SK-N-SH (cell line): ENCODE measurements at regions of chr16 and their contacts with region 1.

Region 1: GRCh38 chr16:28277537-28278388 is 14.6 kb upstream of the SBK1 start:
- DNase-seq: peak; percentile 86
- H3K4me3 ChIP-seq: peak overlapping the region; percentile 48 to 60
- H3K27ac ChIP-seq: peak overlapping the region in 1 of 2 experiments; percentile 71; a peak in 2 of 4 replicates
- H3K4me1 ChIP-seq: peaks cover 0 to 5% of the 10 kb centered on the region in 2 experiments; a peak in 1 of 4 replicates
- H3K27me3 ChIP-seq: peaks cover 6% of the 10 kb centered on the region
- CTCF ChIP-seq: peak; percentile 90
- EP300 ChIP-seq: no peak
- RAD21 ChIP-seq: peak; percentile 97

Region 2: DNA sequence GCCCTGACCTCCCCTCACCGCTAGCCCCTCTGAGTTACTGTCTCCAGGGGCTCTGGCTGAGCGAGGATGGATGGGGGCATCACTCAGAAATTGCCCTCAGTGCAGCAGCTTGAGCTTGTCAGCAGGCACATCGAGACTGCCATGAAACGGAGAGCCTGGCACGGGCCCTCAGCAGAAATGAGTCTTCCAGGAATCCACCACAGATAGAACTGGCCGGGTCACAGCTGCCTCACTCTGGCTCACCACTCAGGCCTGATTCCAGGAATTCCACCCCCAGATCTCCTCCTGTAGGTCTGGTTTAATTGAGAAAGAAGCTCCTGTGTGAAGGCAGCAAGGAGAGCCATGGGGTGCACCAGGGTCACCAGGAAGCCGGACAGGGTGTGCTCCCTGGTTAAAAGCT is 299.8 kb before region 1 on chr16:
- CTCF ChIA-PET with region 1: no interaction called
- POLR2A ChIA-PET with region 1: no interaction called
- DNase-seq: no peak
- H3K4me3 ChIP-seq: no peak overlapping the region
- H3K27ac ChIP-seq: no peak overlapping the region
- H3K4me1 ChIP-seq: peaks cover 0 to 5% of the 10 kb centered on the region in 2 experiments; a peak in 1 of 4 replicates
- H3K27me3 ChIP-seq: no peaks in the 10 kb centered on the region
- CTCF ChIP-seq: no peak
- EP300 ChIP-seq: no peak
- RAD21 ChIP-seq: no peak

Region 3: GRCh38 chr16:27993587-27993986 is 284.2 kb before region 1 on chr16:
- CTCF ChIA-PET with region 1: no interaction called
- POLR2A ChIA-PET with region 1: no interaction called
- DNase-seq: no peak
- H3K4me3 ChIP-seq: no peak overlapping the region
- H3K27ac ChIP-seq: no peak overlapping the region
- H3K4me1 ChIP-seq: no peaks in the 10 kb centered on the region
- H3K27me3 ChIP-seq: no peaks in the 10 kb centered on the region
- CTCF ChIP-seq: no peak
- EP300 ChIP-seq: no peak
- RAD21 ChIP-seq: no peak

Region 4: GRCh38 chr16:28042811-28043210 is 235.0 kb before region 1 on chr16:
- CTCF ChIA-PET with region 1: no interaction called
- POLR2A ChIA-PET with region 1: no interaction called
- DNase-seq: no peak
- H3K4me3 ChIP-seq: no peak overlapping the region
- H3K27ac ChIP-seq: no peak overlapping the region
- H3K4me1 ChIP-seq: no peaks in the 10 kb centered on the region
- H3K27me3 ChIP-seq: no peaks in the 10 kb centered on the region
- CTCF ChIP-seq: no peak
- EP300 ChIP-seq: no peak
- RAD21 ChIP-seq: no peak

Region 5: DNA sequence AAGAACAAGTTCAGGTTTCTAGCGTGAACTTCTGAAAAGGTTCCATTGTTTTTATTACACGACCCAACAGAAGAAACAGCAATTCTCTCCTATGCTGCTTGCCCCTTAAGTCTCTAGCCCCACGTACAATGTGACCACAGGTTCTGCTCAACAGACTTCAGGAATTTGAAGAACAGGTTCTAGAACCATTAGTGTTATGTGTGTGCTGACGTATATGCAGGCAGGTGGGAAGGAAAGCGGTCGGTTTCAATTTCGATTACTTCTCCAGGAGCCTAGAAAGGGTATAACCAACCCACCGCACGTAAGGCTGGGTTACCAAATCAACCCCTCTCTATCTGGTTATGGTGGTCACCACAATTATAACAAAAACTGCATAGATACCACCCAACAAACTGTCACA is 105.4 kb before region 1 on chr16:
- CTCF ChIA-PET with region 1: no interaction called
- POLR2A ChIA-PET with region 1: no interaction called
- DNase-seq: no peak
- H3K4me3 ChIP-seq: no peak overlapping the region
- H3K27ac ChIP-seq: no peak overlapping the region
- H3K4me1 ChIP-seq: peaks cover 0 to 2% of the 10 kb centered on the region in 2 experiments; a peak in 1 of 4 replicates
- H3K27me3 ChIP-seq: no peaks in the 10 kb centered on the region
- CTCF ChIP-seq: no peak
- EP300 ChIP-seq: no peak
- RAD21 ChIP-seq: no peak

Region 6: DNA sequence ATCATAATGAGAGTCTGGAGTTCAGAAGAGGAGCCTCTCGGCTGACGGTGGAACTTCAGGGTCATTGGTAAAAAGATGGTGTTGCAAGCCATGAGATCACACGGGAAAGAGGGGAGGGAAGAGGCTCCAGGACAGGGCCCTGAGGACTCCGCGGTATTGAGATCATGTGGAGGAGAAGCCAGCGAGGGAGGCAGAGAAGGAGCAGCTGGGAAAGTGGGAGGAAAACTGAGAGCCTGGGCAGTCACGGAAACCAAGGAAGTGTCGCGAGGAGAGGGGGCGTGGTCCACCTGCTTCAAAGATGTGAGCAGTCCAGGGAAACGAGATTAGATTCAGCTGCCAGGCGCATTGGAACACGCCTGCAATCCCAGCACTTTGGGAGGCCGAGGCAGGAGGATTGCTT is 13.1 kb before region 1 on chr16:
- CTCF ChIA-PET with region 1: interaction called, 26 read pairs
- POLR2A ChIA-PET with region 1: interaction called, 3 read pairs
- DNase-seq: no peak
- H3K4me3 ChIP-seq: no peak overlapping the region
- H3K27ac ChIP-seq: no peak overlapping the region
- H3K4me1 ChIP-seq: no peaks in the 10 kb centered on the region
- H3K27me3 ChIP-seq: 0 out of 2 replicates have a peak, but pooled peaks cover 8% of the 10 kb centered on the region
- CTCF ChIP-seq: no peak
- EP300 ChIP-seq: no peak
- RAD21 ChIP-seq: no peak

Region 7: GRCh38 chr16:28297784-28298510 is 20.2 kb after region 1 on chr16:
- CTCF ChIA-PET with region 1: interaction called, 82 read pairs
- POLR2A ChIA-PET with region 1: interaction called, 6 read pairs
- DNase-seq: no peak
- H3K4me3 ChIP-seq: no peak overlapping the region
- H3K27ac ChIP-seq: no peak overlapping the region
- H3K4me1 ChIP-seq: peaks cover 0 to 17% of the 10 kb centered on the region in 2 experiments; a peak in 1 of 4 replicates
- H3K27me3 ChIP-seq: 0 out of 2 replicates have a peak, but pooled peaks cover 7% of the 10 kb centered on the region
- CTCF ChIP-seq: no peak
- EP300 ChIP-seq: no peak
- RAD21 ChIP-seq: no peak

Region 8: DNA sequence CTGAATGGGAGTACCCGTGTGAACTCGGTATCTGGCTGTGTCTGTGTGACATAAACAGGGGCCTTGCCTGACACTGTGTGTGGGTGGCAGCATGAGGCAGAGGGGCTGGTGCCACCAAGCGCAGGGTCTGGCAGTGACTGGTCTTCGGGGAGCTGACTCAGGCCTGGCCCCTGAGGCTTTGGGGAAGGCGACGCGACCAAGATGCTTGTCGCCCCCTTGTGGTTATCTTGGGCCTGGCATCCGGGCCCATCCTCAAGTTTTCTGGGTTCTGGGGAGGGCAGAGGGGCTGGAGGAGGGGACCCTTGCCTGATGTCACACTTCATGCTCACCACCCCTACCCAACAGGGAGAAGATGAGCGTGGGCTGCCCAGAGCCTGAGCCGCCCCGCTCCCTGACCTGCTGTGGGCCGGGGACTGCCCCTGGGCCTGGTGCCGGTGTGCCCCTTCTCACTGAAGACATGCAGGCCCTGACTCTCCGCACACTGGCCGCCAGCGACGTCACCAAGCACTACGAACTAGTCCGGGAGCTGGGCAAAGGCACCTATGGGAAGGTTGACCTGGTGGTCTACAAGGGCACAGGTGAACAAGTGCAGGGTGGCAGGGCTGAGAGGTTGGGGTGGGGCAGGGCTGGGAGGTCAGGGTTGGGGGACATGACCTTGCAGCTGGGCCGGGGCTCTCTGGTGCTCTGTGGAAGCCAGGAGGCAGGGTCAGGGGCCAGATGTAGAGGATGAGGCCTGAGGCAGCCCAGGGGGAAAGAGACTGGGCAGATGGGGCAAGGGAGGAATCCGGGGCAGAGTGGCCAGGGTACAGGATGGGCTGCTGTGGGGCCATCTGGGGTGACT is 39.5 kb after region 1 on chr16:
- CTCF ChIA-PET with region 1: interaction called, 302 read pairs
- POLR2A ChIA-PET with region 1: interaction called, 7 read pairs
- DNase-seq: peak; percentile 90
- H3K4me3 ChIP-seq: no peak overlapping the region; a peak in 1 of 4 replicates
- H3K27ac ChIP-seq: no peak overlapping the region; a peak in 1 of 4 replicates
- H3K4me1 ChIP-seq: no peaks in the 10 kb centered on the region; a peak in 1 of 4 replicates
- H3K27me3 ChIP-seq: no peaks in the 10 kb centered on the region
- CTCF ChIP-seq: peak; percentile 87
- EP300 ChIP-seq: no peak
- RAD21 ChIP-seq: peak; percentile 75